Calu3 (cell line): ENCODE measurements at regions of chr6 and their contacts with region 1.

Region 1: DNA sequence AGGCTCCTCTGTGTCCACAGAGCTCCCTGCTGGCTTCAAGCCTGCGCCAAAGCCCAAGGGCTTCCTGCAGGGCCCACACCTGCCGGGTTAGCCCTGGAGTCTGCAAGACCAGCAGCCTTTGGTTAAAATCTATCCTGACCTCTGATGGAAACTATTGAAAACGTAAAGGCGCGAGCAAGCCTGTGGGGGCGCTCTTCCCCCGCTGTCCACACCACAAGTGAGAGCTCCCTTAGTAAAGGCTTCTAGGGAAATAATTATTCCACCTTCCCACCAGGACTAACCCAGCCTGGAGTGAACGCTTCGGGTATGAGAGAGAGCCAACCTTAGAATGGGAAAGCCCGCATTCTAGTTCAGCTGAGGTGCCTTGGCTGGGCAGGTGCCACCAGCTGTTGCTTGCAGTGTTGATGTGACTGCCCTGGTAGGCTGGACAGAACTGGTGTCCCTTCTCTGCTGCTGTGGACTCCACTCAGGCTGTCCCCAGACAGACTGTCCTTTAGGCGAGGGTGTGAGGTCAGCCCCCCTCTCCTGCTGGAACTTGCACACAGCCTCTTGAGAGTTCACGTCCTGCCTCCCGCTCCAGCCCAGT is 68.7 kb downstream of the SYTL3 start:
- DNase-seq: peak; percentile 62
- H3K4me3 Mint-ChIP-seq: no peak overlapping the region
- H3K27ac Mint-ChIP-seq: peak overlapping the region; percentile 40
- H3K4me1 Mint-ChIP-seq: peaks cover 45% of the 10 kb centered on the region
- H3K27me3 Mint-ChIP-seq: no peaks in the 10 kb centered on the region
- CTCF ChIP-seq: peak; percentile 71

Region 2: GRCh38 chr6:158729914-158730907 is 11.7 kb after region 1 on chr6:
- CTCF ChIA-PET with region 1: interaction called, 5 read pairs
- intact Hi-C with region 1: loop called (anchors 1 kb)
- DNase-seq: peak; percentile 95
- H3K4me3 Mint-ChIP-seq: peak overlapping the region; percentile 11
- H3K27ac Mint-ChIP-seq: peak overlapping the region; percentile 87
- H3K4me1 Mint-ChIP-seq: peaks cover 16% of the 10 kb centered on the region
- H3K27me3 Mint-ChIP-seq: no peaks in the 10 kb centered on the region
- CTCF ChIP-seq: no peak

Region 3: GRCh38 chr6:158762787-158763433 is 44.4 kb after region 1 on chr6:
- CTCF ChIA-PET with region 1: interaction called, 5 read pairs
- intact Hi-C with region 1: loop called (anchors 2 kb)
- DNase-seq: no peak
- H3K4me3 Mint-ChIP-seq: no peak overlapping the region
- H3K27ac Mint-ChIP-seq: peak overlapping the region; percentile 84
- H3K4me1 Mint-ChIP-seq: peaks cover 39% of the 10 kb centered on the region
- H3K27me3 Mint-ChIP-seq: no peaks in the 10 kb centered on the region
- CTCF ChIP-seq: no peak